Activated CD8-positive, alpha-beta memory T cell treated with anti-CD3 and anti-CD28 coated beads, Interleukin-2, amount 10 ng/mL, durations not matched to agents 7 days and 5 days (primary cell): ENCODE measurements at regions of chr5 and their contacts with region 1.

Region 1: GRCh38 chr5:151651997-151652645 is 34.6 kb downstream of the SPARC start:
- DNase-seq: peak; percentile 79
- ATAC-seq: peak; percentile 98
- H3K4me3 Mint-ChIP-seq: no peak overlapping the region
- H3K27ac Mint-ChIP-seq: no peak overlapping the region
- H3K4me1 Mint-ChIP-seq: no peaks in the 10 kb centered on the region
- H3K27me3 Mint-ChIP-seq: peaks cover 18% of the 10 kb centered on the region

Region 2: DNA sequence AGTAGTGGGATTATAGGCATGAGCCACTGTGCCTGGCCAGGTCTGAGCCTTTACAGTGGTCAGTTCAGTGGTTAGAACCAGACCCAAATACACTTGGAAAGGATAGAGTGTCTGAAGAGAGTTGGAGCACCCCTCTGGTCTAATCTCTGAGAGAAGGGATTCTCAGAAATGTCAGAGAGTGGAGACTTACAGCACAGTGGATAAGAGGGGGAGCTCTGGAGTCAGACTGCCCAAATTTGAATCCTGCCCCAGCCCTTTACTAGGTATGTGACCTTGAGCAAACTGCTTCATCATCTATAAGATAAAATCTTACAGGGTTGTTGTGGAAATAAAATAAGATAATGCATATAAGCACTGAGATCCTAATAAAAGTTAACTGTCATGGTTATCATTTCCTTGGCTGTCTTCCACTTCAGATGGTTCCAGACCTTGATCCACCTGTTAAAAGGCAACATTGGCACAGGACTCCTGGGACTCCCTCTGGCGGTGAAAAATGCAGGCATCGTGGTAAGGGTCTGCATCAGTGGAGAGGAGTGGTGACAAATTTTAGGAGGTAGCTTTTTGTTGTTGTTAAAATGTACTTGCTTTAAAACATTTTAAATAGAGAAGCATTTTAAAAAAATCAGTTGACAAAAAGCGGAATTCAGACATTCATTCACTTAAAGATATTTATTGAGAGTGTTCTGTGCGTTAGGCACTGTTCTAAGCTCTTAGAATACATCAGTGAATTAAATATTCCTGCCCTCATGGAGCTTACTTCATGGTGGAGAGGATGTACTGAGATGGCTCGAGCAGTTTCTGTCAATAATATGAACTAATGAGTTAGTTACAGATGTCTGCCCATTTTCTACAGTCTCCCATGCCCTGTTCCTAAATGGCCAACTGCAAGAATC is 188.7 kb before region 1 on chr5:
- CTCF ChIA-PET with region 1: no interaction called
- DNase-seq: no peak
- ATAC-seq: no peak
- H3K4me3 Mint-ChIP-seq: no peak overlapping the region
- H3K27ac Mint-ChIP-seq: no peak overlapping the region
- H3K4me1 Mint-ChIP-seq: peaks cover 7% of the 10 kb centered on the region
- H3K27me3 Mint-ChIP-seq: no peaks in the 10 kb centered on the region

Region 3: DNA sequence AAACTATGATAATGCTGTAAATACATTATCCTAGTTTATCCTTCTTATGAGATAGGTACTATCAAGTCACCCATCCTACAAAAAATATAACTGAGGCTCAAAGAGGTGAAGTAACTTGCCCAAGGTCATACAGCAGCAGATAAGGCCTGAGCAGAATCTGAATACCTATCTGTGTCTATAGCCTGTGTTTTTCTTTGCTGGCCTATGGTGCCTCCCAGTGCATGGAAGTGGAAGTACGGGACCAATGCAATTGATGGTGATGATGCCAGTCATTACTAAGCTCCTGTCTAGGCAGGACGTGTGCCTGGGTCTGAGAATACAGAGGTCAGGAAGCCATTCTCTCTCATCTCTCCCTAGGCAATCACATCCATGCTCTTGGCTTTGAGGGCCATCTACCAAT is 128.8 kb before region 1 on chr5:
- CTCF ChIA-PET with region 1: interaction called, 17 read pairs
- DNase-seq: peak; percentile 58
- ATAC-seq: peak; percentile 82
- H3K4me3 Mint-ChIP-seq: no peak overlapping the region
- H3K27ac Mint-ChIP-seq: no peak overlapping the region
- H3K4me1 Mint-ChIP-seq: no peaks in the 10 kb centered on the region
- H3K27me3 Mint-ChIP-seq: peaks cover 4% of the 10 kb centered on the region

Region 4: GRCh38 chr5:151699071-151699901 is 47.2 kb after region 1 on chr5:
- CTCF ChIA-PET with region 1: no interaction called
- DNase-seq: no peak
- ATAC-seq: no peak
- H3K4me3 Mint-ChIP-seq: no peak overlapping the region
- H3K27ac Mint-ChIP-seq: no peak overlapping the region
- H3K4me1 Mint-ChIP-seq: no peaks in the 10 kb centered on the region
- H3K27me3 Mint-ChIP-seq: peaks cover 5% of the 10 kb centered on the region